ENCODE measurements at regions of chr15 and their contacts with region 1.

Region 1: DNA sequence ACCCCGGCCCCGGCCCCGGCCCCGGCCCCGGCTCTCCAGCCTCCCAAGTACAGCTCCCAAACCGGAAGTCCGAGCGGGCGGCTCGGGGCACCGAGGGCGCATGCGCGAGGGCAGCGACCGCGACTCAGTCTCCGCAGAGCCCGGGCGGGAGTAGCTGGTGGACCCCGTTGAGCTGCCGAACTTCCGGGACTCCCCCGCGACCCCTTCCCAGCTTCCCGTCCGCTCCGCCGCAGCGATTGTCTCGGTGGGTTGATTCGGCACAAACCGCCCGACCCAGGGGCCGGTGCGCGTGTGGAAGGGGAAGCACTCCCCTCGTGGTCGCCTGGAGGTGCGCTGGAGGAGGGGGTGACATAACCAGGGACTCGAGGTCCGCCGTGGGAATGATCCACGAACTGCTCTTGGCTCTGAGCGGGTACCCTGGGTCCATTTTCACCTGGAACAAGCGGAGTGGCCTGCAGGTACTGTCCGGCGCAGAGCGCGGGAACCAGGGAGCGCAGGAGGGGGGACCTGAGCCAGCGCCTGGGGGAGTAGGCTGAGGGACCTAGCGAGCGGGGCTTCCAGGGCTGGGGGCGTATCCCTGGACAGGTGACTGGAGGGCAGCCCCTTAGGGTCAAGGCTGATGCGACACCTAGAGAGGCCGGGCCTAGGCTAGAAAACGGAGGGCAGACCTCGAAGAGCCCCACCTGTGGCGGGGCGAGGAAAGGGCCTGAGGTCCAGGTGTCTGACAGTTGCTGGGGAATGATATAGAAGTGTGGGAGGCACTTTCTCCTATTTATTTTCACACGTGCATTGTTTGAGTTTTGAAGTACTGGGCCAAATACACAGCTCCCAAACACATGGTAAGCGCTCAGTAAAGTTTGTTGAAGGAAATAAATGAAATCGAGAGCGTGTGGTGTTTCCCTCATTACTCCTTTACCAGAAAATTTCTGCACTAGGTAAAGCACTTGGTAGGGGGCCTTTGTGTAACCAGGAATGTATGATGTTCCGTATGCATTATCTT is at the starts of genes TUBGCP4 and ZSCAN29:
- DNase-seq: no peak
- H3K4me3 ChIP-seq: peak within 1 kb of the TSS; percentile 94
- CTCF ChIP-seq: peak; percentile 22

Region 2: GRCh38 chr15:43212293-43212692 is 159.0 kb before region 1 on chr15:
- CTCF ChIA-PET with region 1: no interaction called
- POLR2A ChIA-PET with region 1: no interaction called
- DNase-seq: no peak
- H3K4me3 ChIP-seq: no peak overlapping the region
- CTCF ChIP-seq: no peak

Region 3: DNA sequence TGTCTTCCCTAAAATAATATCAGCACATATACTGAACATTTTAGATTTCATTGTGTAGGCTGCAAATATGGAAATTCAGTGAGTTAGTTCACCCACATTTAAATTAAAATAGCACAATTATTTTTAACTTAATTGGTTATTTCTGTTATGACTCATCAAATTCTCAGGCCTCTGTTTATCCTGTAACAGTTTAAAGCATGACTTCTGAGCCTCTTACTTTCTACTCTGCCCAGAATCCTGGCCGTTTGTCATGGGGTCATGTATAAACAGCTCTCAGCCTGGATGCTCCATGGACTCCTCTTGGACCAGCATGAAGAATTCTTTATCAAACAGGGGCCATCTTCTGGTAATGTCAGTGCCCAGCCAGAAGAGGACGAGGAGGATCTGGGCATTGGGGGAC is 11.8 kb after region 1 on chr15:
- CTCF ChIA-PET with region 1: interaction called, 11 read pairs
- POLR2A ChIA-PET with region 1: no interaction called
- DNase-seq: no peak
- H3K4me3 ChIP-seq: no peak overlapping the region
- CTCF ChIP-seq: no peak

Region 4: GRCh38 chr15:43390723-43391122 is 19.4 kb after region 1 on chr15:
- CTCF ChIA-PET with region 1: interaction called, 16 read pairs
- POLR2A ChIA-PET with region 1: no interaction called
- DNase-seq: no peak
- H3K4me3 ChIP-seq: no peak overlapping the region
- CTCF ChIP-seq: no peak

Region 5: GRCh38 chr15:43404130-43404529 is 32.9 kb after region 1 on chr15:
- CTCF ChIA-PET with region 1: interaction called, 25 read pairs
- POLR2A ChIA-PET with region 1: interaction called, 3 read pairs
- DNase-seq: no peak
- H3K4me3 ChIP-seq: no peak overlapping the region
- CTCF ChIP-seq: no peak